ENCODE measurements at regions of chr2 and their contacts with region 1.

Region 1: GRCh38 chr2:178414266-178415247 is 36.4 kb downstream of the PRKRA start:
- DNase-seq: peak; percentile 85

Region 2: GRCh38 chr2:178043266-178043665 is 371.3 kb before region 1 on chr2:
- CTCF ChIA-PET with region 1: no interaction called
- POLR2A ChIA-PET with region 1: no interaction called
- DNase-seq: no peak

Region 3: GRCh38 chr2:178112202-178113152 is 302.1 kb before region 1 on chr2 and contains the start of gene RBM45:
- CTCF ChIA-PET with region 1: interaction called, 10 read pairs
- POLR2A ChIA-PET with region 1: interaction called, 23 read pairs
- DNase-seq: peak; percentile 92

Region 4: DNA sequence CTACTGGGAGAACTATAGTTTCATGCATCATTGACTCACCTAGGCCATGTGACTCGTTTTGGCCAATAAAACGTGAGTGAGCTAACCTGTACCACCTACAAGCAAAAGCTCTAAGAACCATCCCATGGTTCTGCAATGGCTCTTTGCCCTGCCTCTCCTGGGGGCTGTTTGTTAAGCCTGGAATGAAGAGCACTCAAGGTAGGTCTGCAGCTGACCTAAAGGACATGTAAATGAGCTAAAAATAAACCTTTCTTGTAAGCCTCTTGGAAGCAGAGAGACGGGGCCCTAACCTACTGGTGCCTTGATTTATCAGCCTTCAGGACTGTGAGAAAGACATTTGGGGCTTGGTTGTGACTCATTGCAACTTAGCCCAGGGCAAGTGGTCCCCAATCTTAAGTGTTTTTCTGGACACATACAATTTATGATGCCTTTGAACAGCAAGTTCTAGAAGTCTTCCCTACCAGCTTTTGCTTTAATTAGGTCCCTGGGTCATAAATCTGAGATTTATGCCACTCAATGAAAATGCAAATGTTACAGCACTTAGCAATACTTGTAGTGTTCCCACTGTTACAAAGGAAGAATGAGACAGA is 112.8 kb before region 1 on chr2:
- CTCF ChIA-PET with region 1: interaction called, 4 read pairs
- POLR2A ChIA-PET with region 1: interaction called, 12 read pairs
- DNase-seq: no peak

Region 5: DNA sequence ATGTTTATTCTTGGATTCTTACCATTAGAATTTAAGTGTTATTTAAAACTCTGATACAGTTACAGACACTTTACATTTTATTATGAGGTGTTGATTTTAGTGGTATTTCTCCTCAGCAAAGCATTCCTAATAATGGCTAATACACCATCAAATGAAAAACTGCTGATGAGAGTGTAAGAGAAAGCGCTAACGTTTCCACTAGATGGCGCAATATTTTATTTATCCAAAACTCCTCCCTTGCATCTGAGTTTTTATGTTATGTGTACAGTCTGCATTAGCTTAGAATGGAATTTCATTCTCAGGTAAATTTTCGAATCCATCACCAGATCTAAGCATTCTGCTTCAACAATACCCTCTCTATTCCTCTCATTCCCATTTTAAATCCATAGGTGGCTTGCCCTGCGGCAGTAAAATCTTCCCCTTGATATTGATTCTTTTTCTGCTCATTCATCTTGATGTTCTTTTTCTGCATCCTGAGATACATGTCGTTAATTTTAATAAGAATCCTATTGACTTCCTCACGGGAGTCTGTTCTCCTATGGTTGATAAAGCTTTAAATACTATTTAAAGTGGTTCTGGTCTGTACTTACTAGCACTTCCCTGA is 17.5 kb before region 1 on chr2:
- CTCF ChIA-PET with region 1: interaction called, 9 read pairs
- POLR2A ChIA-PET with region 1: interaction called, 19 read pairs
- DNase-seq: peak; percentile 36

Region 6: GRCh38 chr2:178404368-178404767 is 10.2 kb before region 1 on chr2:
- CTCF ChIA-PET with region 1: interaction called, 7 read pairs
- POLR2A ChIA-PET with region 1: interaction called, 19 read pairs
- DNase-seq: no peak

Region 7: DNA sequence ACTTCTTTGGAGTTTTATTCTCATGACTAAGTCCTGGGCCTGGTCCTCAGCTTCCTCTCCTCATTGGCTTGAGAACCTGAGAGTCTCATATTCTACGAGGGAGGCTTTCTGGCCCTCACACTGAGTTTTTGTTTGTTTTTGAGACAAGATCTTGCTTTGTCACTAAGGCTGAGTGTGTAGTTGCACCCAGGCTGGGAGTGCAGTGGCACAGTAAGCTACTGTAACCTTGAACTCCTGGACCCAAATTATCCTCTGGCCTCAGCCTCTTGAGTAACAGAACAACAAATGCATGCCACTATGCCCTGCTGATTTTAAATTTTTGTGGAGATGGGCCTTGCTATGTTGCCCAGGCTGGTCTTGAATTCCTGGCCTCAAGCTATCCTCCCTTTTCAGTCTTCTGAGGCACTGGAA is 13.8 kb after region 1 on chr2:
- CTCF ChIA-PET with region 1: interaction called, 10 read pairs
- POLR2A ChIA-PET with region 1: interaction called, 13 read pairs
- DNase-seq: no peak

Region 8: DNA sequence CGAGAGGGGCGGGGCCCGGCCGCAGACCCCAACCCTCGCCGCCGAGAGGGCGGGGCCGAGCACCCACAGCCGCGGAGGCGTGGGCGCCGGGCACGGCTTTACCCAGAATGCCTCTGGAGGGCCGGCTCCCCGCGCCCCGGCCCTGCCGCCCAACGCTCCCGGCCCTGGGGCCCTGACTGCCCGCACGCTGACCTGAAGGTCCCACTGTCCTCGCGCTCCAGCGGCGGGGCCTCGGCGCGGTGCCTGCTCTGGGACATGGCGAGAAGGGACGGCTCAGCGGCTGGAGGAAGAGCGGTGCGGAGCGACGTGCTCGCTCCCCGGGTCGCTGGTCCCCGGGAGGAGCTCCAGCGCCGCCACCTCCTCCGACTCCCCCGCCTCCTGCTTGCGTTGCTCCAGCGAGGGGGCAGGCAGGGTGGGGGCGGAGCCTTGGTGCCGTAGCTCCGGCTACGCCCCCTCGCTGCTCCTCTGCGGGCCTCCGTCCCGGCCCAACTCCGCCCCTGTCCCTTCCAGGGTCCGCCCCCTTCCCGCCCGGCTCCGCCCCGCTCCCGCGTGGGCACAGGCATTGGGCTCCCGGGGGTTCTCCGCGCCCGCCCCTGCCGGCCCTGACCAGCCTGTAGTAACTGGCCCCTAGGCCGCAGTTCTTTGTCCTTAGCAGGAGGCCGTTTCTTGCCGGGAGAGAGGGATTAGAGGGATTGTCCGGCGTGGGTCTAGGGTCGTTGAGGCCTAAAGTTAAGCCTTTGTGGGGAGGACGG is 36.4 kb after region 1 on chr2 and contains the starts of genes PJVK and PRKRA:
- CTCF ChIA-PET with region 1: interaction called, 7 read pairs
- POLR2A ChIA-PET with region 1: interaction called, 29 read pairs
- DNase-seq: peak; percentile 96

Measured in HEK293T (cell line).